GM10248 (cell line): ENCODE measurements at regions of chr4 and their contacts with region 1.

Region 1: GRCh38 chr4:88230969-88231771 is 53.2 kb downstream of the PPM1K start:
- DNase-seq: no peak
- CTCF ChIP-seq: no peak

Region 2: GRCh38 chr4:88217920-88218319 is 13.2 kb before region 1 on chr4:
- CTCF ChIA-PET with region 1: interaction called, 14 read pairs
- POLR2A ChIA-PET with region 1: no interaction called
- DNase-seq: no peak
- CTCF ChIP-seq: no peak

Region 3: GRCh38 chr4:88523325-88524129 is 292.4 kb after region 1 on chr4 and contains the start of gene PYURF:
- CTCF ChIA-PET with region 1: interaction called, 266 read pairs
- POLR2A ChIA-PET with region 1: no interaction called
- DNase-seq: peak; percentile 88
- CTCF ChIP-seq: no peak